ENCODE measurements at regions of chr19 and their contacts with region 1.

Region 1: GRCh38 chr19:5790573-5791520 is at the start of gene DUS3L:
- DNase-seq: peak; percentile 95 to 99 (median 98)
- ATAC-seq: peak; percentile 97
- H3K4me3 ChIP-seq: peak within 1 kb of the TSS; percentile 65
- H3K27ac ChIP-seq: peak within 1 kb of the TSS; percentile 100
- H3K4me1 ChIP-seq: peaks cover 4 to 42% of the 10 kb centered on the region in 2 experiments; a peak in 3 of 5 replicates
- H3K27me3 ChIP-seq: no peaks in the 10 kb centered on the region
- CTCF ChIP-seq: no peak
- EP300 ChIP-seq: no peak; the same call in 1 of the 2 replicates
- POLR2A ChIP-seq: peak; percentile 98
- RAD21 ChIP-seq: no peak
- polyA plus RNA-seq, gene DUS3L: 1.7 to 2.1 TPM

Region 2: DNA sequence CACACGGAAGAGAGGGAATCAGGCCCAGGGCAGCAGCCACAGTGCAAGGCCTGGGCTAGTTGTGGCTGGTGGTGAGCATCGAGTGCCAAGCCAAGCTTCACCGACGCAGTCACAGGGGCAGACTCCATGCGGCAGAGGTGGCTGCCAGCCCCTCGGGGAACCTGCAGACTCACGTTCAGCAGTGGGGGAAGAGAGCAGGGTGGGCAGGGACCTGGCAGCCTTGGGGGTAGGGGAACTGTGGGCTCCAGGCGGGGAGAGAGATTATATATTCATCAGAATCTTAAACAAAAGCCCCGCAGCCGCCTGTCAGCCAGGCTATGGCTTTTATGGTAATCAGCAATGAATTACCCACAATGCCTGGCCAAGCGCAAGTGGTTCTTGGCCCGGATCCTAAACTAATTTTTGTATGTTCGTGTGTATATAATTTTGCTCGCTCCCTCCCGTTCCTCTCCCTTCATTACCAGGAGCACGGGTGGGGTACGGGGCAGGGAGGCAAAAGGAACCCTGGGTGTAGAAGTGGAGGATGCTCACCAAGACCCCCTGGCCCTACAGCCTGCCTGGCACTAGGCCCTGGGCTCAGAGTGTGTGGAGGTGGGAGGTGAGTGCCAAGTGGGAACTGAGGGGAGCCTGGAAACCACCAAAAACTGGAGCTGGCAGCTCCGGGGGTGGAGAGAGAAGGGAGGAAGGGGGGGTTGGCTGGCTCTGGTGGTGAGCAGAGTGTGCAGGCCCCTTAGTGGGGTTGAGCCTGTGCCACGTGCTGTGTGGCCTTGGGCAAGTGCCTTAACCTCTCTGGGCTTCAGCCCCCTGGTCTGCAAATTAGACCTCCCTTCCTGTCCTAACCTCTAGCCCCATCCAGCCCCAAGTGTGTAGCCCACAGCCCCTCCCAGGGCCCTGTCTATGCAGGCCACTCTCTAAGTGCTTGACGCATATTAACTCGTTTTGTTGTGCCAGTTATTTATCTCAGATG is 482.1 kb before region 1 on chr19:
- CTCF ChIA-PET with region 1: no interaction called
- POLR2A ChIA-PET with region 1: no interaction called
- in situ Hi-C with region 1: no loop called
- intact Hi-C with region 1: no loop called
- DNase-seq: peak; percentile 47 to 64 (median 56)
- ATAC-seq: peak; percentile 89
- H3K4me3 ChIP-seq: no peak overlapping the region
- H3K27ac ChIP-seq: peak overlapping the region; percentile 69; the same call in 2 of the 3 replicates
- H3K4me1 ChIP-seq: peaks cover 3 to 9% of the 10 kb centered on the region in 2 experiments; a peak in 3 of 5 replicates
- H3K27me3 ChIP-seq: no peaks in the 10 kb centered on the region; a peak in 1 of 5 replicates
- CTCF ChIP-seq: no peak
- EP300 ChIP-seq: no peak
- POLR2A ChIP-seq: peak; percentile 97
- RAD21 ChIP-seq: no peak

Region 3: DNA sequence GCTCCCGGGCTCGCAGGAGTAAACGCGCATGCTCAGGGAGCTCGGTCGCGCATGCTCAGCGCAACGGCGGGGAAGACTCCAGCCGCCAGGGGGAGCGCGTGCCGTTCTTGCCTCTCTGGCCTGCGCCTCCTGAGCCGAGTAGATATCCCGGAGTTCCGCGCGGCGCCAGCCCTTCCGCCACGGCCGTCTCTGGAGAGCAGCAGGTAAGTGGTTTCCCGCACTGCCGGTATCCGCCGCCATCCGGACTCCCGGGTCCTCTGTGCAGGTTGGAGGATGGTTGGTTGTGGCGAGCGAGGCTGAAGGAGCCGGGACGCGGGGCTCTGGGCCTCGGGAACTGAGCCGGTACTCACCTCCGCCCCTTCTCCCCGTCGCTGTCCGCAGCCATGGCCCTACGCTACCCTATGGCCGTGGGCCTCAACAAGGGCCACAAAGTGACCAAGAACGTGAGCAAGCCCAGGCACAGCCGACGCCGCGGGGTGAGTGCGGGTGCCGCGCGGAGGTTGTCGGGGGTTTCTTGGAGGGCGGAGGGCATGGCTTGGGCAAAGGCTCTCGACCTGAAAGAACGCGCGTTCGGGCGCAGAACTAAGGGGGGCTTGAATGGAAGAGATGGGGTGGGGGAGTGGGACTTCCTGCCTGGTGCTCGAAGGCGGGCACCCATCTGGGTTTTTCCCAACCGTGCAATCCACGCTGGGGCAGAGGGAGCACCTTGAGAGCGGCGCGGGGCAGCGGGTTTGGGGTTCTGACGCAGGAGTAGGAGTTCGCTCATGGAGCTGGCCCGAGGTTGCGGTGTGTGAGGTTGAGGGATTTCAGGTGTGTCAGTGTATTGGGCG is 100.5 kb before region 1 on chr19 and contains the start of gene RPL36:
- CTCF ChIA-PET with region 1: no interaction called
- POLR2A ChIA-PET with region 1: interaction called, 16 read pairs
- in situ Hi-C with region 1: no loop called
- intact Hi-C with region 1: loop called (anchors 2 kb)
- DNase-seq: peak; percentile 77 to 98 (median 87)
- ATAC-seq: peak; percentile 57
- H3K4me3 ChIP-seq: peak within 1 kb of the TSS; percentile 100
- H3K27ac ChIP-seq: peak within 1 kb of the TSS; percentile 96
- H3K4me1 ChIP-seq: peaks cover 20 to 70% of the 10 kb centered on the region in 2 experiments
- H3K27me3 ChIP-seq: no peaks in the 10 kb centered on the region
- CTCF ChIP-seq: peak; percentile 93 to 99 (median 98)
- EP300 ChIP-seq: no peak
- POLR2A ChIP-seq: peak; percentile 99
- RAD21 ChIP-seq: peak in 1 of 2 experiments; percentile 52; a peak in 1 of 4 replicates
- polyA plus RNA-seq, gene RPL36: 3,132 to 3,412 TPM

Region 4: DNA sequence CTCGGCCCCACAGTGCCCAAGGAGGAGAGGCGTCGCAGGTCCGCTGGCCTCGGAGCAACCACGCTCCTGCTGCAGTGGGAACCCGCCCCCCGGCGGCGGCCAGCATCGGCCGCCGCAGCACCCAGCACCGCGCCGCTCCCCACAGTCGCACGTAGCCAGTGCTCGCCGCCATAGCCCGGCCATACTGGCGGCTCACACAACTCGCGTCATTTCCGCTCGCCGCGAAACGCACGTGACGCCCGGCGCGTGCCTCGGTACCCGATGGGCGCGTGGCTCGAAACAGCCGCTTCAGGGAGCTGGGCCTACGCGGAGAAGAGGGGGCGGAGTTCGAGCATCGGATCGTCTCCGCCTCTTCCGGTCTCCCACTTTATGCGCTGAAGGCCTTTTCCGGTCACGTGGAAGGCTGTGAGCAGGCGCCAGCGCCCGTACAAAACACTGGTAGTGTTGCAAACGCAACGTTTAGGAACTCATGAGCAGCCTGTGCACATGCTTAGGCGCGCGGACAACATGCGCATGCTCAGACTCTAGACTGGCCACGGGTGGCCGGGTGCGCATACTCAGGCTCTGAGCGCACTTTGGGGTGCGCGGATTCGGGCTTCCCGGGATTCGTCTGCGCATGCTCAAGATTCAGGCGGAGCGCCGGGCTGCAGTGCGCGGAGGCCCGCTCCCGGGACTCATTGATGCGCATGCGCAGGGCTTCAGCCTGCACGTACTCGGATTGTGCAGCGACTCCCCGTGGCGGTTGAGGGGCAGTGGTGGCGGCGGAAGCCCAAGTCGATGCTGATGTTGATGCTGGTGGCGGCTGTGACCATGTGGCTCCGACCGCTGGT is 70.7 kb before region 1 on chr19 and contains the starts of genes CATSPERD and LONP1:
- CTCF ChIA-PET with region 1: no interaction called
- POLR2A ChIA-PET with region 1: interaction called, 6 read pairs
- in situ Hi-C with region 1: no loop called
- intact Hi-C with region 1: loop called (anchors 2 kb)
- DNase-seq: peak; percentile 99
- ATAC-seq: peak; percentile 91
- H3K4me3 ChIP-seq: peak within 1 kb of the TSS; percentile 98
- H3K27ac ChIP-seq: peak within 1 kb of the TSS; percentile 99
- H3K4me1 ChIP-seq: peaks cover 13 to 28% of the 10 kb centered on the region in 2 experiments; a peak in 4 of 5 replicates
- H3K27me3 ChIP-seq: no peaks in the 10 kb centered on the region
- CTCF ChIP-seq: peak; percentile 92 to 96 (median 93)
- EP300 ChIP-seq: peak; percentile 65; the same call in 1 of the 2 replicates
- POLR2A ChIP-seq: peak; percentile 87
- RAD21 ChIP-seq: peak; percentile 41 to 56
- polyA plus RNA-seq, gene CATSPERD: not detected
- polyA plus RNA-seq, gene LONP1: 1.1 to 3.7 TPM

Region 5: GRCh38 chr19:5774921-5775320 is 15.9 kb before region 1 on chr19:
- CTCF ChIA-PET with region 1: no interaction called
- POLR2A ChIA-PET with region 1: interaction called, 13 read pairs
- in situ Hi-C with region 1: no loop called
- intact Hi-C with region 1: loop called (anchors 1 kb)
- DNase-seq: no peak
- ATAC-seq: no peak
- H3K4me3 ChIP-seq: no peak overlapping the region
- H3K27ac ChIP-seq: no peak overlapping the region
- H3K4me1 ChIP-seq: peaks cover 0 to 10% of the 10 kb centered on the region in 2 experiments; a peak in 4 of 5 replicates
- H3K27me3 ChIP-seq: peaks cover 2 to 11% of the 10 kb centered on the region in 2 experiments; a peak in 2 of 5 replicates
- CTCF ChIP-seq: no peak
- EP300 ChIP-seq: no peak
- POLR2A ChIP-seq: no peak
- RAD21 ChIP-seq: no peak

Region 6: GRCh38 chr19:5803752-5804515 is 13.1 kb after region 1 on chr19:
- CTCF ChIA-PET with region 1: no interaction called
- POLR2A ChIA-PET with region 1: interaction called, 11 read pairs
- in situ Hi-C with region 1: no loop called
- intact Hi-C with region 1: no loop called
- DNase-seq: peak; percentile 94 to 97 (median 96)
- ATAC-seq: peak; percentile 93
- H3K4me3 ChIP-seq: peak overlapping the region; percentile 30; the same call in 1 of the 2 replicates
- H3K27ac ChIP-seq: peak overlapping the region; percentile 5; the same call in 2 of the 3 replicates
- H3K4me1 ChIP-seq: peaks cover 34 to 76% of the 10 kb centered on the region in 2 experiments
- H3K27me3 ChIP-seq: no peaks in the 10 kb centered on the region
- CTCF ChIP-seq: peak; percentile 98 to 100 (median 99)
- EP300 ChIP-seq: no peak
- POLR2A ChIP-seq: no peak
- RAD21 ChIP-seq: peak; percentile 91 to 96

Region 7: GRCh38 chr19:5827891-5828660 is 37.2 kb after region 1 on chr19:
- CTCF ChIA-PET with region 1: interaction called, 4 read pairs
- POLR2A ChIA-PET with region 1: interaction called, 16 read pairs
- in situ Hi-C with region 1: no loop called
- intact Hi-C with region 1: no loop called
- DNase-seq: peak; percentile 97 to 99 (median 99)
- ATAC-seq: peak; percentile 86
- H3K4me3 ChIP-seq: peak overlapping the region; percentile 59
- H3K27ac ChIP-seq: peak overlapping the region; percentile 96
- H3K4me1 ChIP-seq: peaks cover 6 to 69% of the 10 kb centered on the region in 2 experiments; a peak in 4 of 5 replicates
- H3K27me3 ChIP-seq: peaks cover 0 to 5% of the 10 kb centered on the region in 2 experiments; a peak in 3 of 5 replicates
- CTCF ChIP-seq: peak in 1 of 3 experiments; percentile 33; a peak in 2 of 6 replicates
- EP300 ChIP-seq: peak; percentile 30; the same call in 1 of the 2 replicates
- POLR2A ChIP-seq: peak; percentile 99
- RAD21 ChIP-seq: no peak

Region 8: DNA sequence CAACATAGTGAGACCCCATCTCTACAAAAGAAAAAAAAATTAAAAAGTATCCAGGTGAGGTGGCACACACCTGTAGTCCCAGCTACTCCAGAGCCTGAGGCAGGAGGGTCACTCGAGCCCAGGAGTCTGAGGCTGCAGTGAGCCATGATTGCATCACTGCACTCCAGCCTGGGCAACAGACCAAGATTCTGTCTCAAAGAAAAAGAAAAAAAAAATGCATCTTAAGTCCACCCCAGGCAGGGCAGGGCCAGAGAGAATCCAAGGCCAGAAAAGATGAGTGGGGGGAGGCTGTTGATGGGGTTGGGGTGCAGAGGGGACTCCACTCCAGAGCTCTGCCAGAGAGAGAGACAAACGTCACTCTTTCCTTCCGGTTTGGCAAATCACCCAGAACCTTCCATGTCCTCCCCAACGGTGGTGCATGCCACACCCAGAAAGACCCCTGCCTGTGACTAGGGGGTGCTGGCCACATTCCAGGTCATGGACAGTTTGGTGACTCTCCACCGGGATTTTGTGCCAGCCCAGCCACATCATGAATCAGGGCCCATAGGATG is 60.0 kb after region 1 on chr19:
- CTCF ChIA-PET with region 1: no interaction called
- POLR2A ChIA-PET with region 1: no interaction called
- in situ Hi-C with region 1: no loop called
- intact Hi-C with region 1: no loop called
- DNase-seq: peak in 3 of 4 experiments; percentile 5 to 6 (median 6)
- ATAC-seq: peak; percentile 77
- H3K4me3 ChIP-seq: no peak overlapping the region
- H3K27ac ChIP-seq: no peak overlapping the region
- H3K4me1 ChIP-seq: no peaks in the 10 kb centered on the region; a peak in 1 of 5 replicates
- H3K27me3 ChIP-seq: peaks cover 21 to 37% of the 10 kb centered on the region in 2 experiments
- CTCF ChIP-seq: no peak
- EP300 ChIP-seq: no peak
- POLR2A ChIP-seq: no peak
- RAD21 ChIP-seq: no peak

Region 9: GRCh38 chr19:5891938-5892771 is 101.3 kb after region 1 on chr19:
- CTCF ChIA-PET with region 1: no interaction called
- POLR2A ChIA-PET with region 1: no interaction called
- in situ Hi-C with region 1: no loop called
- intact Hi-C with region 1: no loop called
- DNase-seq: peak; percentile 60 to 69 (median 64)
- ATAC-seq: peak; percentile 74
- H3K4me3 ChIP-seq: no peak overlapping the region
- H3K27ac ChIP-seq: no peak overlapping the region
- H3K4me1 ChIP-seq: peaks cover 16 to 63% of the 10 kb centered on the region in 2 experiments
- H3K27me3 ChIP-seq: no peaks in the 10 kb centered on the region
- CTCF ChIP-seq: peak; percentile 73 to 82 (median 78)
- EP300 ChIP-seq: no peak
- POLR2A ChIP-seq: peak; percentile 65
- RAD21 ChIP-seq: peak; percentile 56 to 68

Region 10: GRCh38 chr19:5904352-5905113 is 113.7 kb after region 1 on chr19 and contains the start of gene VMAC:
- CTCF ChIA-PET with region 1: no interaction called
- POLR2A ChIA-PET with region 1: interaction called, 17 read pairs
- in situ Hi-C with region 1: no loop called
- intact Hi-C with region 1: no loop called
- DNase-seq: peak; percentile 98 to 100 (median 98)
- ATAC-seq: peak; percentile 90
- H3K4me3 ChIP-seq: peak within 1 kb of the TSS; percentile 90
- H3K27ac ChIP-seq: peak within 1 kb of the TSS; percentile 96
- H3K4me1 ChIP-seq: peaks cover 4 to 30% of the 10 kb centered on the region in 2 experiments; a peak in 4 of 5 replicates
- H3K27me3 ChIP-seq: no peaks in the 10 kb centered on the region
- CTCF ChIP-seq: no peak
- EP300 ChIP-seq: no peak
- POLR2A ChIP-seq: no peak; the same call in 1 of the 2 replicates
- RAD21 ChIP-seq: no peak
- polyA plus RNA-seq, gene VMAC: 0.03 to 0.06 TPM